ENCODE measurements at regions of chr17 and their contacts with region 1.

Region 1: DNA sequence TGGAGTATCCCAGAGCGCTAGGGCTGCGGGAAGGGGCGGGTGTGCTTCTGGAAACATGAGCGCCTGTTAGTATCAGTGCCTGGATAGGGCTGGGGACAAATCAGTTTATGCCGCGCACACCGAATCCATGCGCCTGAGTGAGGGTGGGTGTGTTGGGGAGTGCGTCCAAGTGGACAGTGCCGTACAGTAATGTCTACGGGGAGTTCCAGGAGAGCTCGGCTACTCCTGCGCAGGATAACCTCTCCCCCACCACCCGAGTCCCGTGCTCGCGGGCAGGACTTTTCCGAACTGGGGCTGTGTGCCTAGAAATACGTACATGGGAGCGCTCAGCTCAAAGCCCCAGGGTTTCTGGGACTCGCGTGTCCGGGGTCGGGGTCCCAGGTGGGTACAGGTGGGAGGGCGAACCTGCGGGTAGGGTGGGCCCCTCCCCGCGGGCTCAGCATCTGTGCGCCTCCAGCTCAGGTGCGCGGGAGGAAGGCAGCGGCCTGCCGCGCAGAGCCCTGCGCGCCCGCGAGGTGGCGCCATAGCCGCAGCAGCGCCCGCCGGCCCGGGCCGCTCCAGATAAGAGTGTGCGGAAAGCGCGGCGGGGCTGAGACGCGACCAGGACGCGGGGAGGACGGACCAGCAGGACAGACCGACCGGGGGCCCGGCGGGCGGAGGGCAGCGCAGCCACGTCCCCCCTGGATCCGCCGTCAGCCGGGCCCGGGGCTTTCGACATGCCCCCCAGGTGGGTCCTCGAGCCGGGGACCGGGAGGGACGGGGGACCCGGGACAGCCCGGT is at the start of gene HIC1:
- DNase-seq: peak; percentile 84
- H3K4me3 Mint-ChIP-seq: peak within 1 kb of the TSS; percentile 76
- H3K27ac Mint-ChIP-seq: peak within 1 kb of the TSS; percentile 83
- H3K4me1 Mint-ChIP-seq: peaks cover 32% of the 10 kb centered on the region
- H3K27me3 Mint-ChIP-seq: peaks cover 56% of the 10 kb centered on the region

Region 2: DNA sequence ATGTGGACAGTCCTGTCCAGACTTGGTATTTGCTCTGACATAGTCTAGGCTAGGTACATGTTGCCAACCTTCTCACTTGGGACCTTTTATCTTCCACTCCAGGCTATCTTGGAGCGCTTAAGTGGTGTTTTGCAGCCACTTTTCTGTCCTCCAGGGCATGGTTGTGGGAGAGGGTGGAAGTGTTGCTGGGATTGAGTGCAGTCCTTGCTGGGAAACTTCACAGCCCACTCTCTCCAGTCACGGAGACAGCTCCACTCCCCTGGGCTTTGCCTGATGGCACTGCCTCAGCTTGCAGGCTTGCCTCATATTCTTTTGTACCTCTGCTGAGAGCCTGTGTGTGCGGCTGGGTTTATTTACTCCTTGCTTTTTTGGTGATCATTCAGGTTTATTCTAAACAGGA is 207.5 kb before region 1 on chr17:
- CTCF ChIA-PET with region 1: no interaction called
- DNase-seq: no peak
- H3K4me3 Mint-ChIP-seq: no peak overlapping the region
- H3K27ac Mint-ChIP-seq: peak overlapping the region; percentile 58
- H3K4me1 Mint-ChIP-seq: no peaks in the 10 kb centered on the region
- H3K27me3 Mint-ChIP-seq: no peaks in the 10 kb centered on the region

Region 3: GRCh38 chr17:2011411-2012371 is 43.0 kb before region 1 on chr17:
- CTCF ChIA-PET with region 1: no interaction called
- DNase-seq: no peak
- H3K4me3 Mint-ChIP-seq: no peak overlapping the region
- H3K27ac Mint-ChIP-seq: no peak overlapping the region
- H3K4me1 Mint-ChIP-seq: peaks cover 4% of the 10 kb centered on the region
- H3K27me3 Mint-ChIP-seq: peaks cover 51% of the 10 kb centered on the region

Region 4: DNA sequence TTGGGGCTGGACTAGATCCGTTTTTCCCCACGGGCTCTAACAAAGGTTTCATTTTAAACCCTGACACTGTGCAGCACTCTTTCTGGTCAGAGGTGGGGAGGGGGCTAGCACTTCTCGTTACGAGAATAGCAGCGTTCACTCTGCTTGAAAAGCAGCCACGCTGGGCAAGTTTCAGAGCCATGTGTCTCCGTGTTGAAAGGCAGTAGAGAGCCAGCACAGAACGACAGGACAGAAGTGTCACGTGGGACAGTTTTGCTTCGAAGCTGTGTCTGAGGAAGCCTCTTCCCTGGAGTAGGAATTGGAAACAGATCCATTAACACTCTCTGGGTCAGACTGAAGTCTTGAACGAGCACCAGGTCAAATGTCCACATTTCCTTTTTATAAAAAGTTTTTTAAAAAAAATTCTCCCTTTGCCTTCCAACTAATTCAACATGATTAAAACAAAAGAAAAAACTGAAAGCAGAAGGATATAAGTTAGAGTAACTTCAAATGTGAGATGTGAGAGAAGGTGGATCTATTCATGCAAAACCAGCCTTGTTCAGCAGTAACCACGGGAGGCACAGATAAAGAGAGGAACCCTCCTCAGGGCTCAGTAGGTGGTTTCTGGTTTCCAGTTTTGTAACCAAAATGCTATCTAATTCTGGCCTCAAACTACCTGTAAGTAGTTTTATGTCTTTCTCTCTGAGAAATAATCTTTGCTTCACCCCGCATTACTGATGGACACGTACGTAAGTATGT is 183.9 kb after region 1 on chr17:
- CTCF ChIA-PET with region 1: interaction called, 147 read pairs
- DNase-seq: peak; percentile 25
- H3K4me3 Mint-ChIP-seq: no peak overlapping the region
- H3K27ac Mint-ChIP-seq: peak overlapping the region; percentile 8
- H3K4me1 Mint-ChIP-seq: peaks cover 57% of the 10 kb centered on the region
- H3K27me3 Mint-ChIP-seq: no peaks in the 10 kb centered on the region

Region 5: DNA sequence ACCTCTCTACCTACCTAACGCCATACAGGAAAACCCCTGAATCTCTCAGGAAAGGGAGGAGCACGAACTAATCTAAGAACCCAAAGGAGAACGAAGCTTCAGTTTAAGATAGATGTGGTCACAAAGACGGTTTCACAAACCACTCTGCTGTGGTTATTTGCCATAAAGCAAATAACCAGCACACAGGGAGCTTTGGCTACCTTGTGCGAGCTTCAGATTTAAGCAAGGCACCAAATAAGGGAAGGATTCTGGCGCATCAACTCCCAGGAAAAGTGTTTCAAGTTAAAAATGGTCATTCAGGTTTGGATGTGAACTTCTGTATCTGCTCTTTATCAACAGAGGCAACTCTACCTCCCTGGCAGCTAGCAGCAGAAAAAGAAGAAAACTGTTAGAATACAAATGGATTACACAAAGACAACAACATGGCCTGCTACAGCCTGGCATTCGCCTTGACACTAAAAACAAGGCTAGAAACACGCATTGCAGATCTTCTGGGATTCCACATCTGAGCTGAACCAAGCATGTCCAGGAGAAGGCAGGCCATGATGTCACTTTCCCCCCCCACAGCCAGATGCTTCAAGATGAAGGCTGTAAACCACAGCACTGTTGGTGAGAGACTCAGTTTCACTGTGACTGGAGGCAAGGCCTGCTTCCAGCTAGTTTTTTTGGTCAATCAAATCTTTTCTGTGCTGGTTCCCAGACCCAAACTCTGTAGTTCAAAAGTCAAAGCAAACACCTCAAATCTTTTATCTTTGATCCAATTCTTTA is 205.3 kb after region 1 on chr17:
- CTCF ChIA-PET with region 1: interaction called, 12 read pairs
- DNase-seq: peak; percentile 88
- H3K4me3 Mint-ChIP-seq: peak overlapping the region; percentile 70
- H3K27ac Mint-ChIP-seq: peak overlapping the region; percentile 95
- H3K4me1 Mint-ChIP-seq: peaks cover 86% of the 10 kb centered on the region
- H3K27me3 Mint-ChIP-seq: no peaks in the 10 kb centered on the region

Region 6: DNA sequence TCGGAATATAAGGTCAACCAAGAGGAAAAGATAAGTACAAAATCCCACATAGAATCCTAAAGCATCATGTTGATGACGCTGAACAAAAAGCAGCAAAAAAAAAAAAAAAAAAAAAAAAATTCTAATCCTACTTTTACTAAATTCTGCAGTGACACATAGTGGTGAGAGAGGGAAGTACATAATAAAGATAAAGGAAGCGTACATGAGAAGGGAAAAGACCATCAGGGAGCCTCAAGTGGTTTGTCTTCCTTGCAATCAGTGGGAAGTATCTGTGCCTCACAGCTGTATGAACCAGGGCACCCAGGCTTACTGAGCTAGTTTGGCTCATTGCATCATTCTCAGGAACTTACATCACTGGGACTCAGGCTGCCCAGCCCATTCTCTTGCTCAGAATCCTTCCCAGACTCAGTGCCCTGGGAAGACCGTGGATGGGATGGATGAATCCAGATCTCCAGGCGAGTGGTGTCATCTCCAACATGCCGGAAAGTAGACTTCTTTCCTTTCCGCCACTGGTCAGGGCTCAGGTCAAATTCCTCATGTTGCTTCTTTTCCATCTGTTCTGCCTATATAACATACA is 227.7 kb after region 1 on chr17:
- CTCF ChIA-PET with region 1: interaction called, 86 read pairs
- DNase-seq: no peak
- H3K4me3 Mint-ChIP-seq: no peak overlapping the region
- H3K27ac Mint-ChIP-seq: peak overlapping the region; percentile 75
- H3K4me1 Mint-ChIP-seq: peaks cover 53% of the 10 kb centered on the region
- H3K27me3 Mint-ChIP-seq: no peaks in the 10 kb centered on the region